Activated CD8-positive, alpha-beta T cell treated with anti-CD3 and anti-CD28 coated beads for 36 hours (primary cell): ENCODE measurements at regions of chr12 and their contacts with region 1.

Region 1: DNA sequence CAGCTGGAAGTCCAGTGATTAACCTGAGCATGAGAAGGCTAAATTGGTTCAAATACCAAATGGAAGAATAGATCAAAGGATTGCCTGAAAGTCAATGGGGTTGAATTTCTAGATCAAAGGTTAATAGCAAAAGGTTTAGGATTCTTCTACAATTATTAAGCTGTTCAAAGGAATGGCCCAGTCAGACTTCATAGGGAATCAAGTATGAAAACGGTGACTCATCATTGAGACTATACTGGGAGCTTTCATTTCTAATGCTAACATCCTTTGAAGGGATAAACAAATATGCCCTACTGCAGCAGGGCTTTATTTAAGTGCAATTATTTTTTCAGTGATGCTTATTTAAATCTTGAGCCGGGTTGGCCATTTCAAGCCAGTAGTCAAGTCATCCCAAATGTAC is 152.8 kb downstream of the RIMBP2 start:
- DNase-seq: no peak
- ATAC-seq: no peak
- H3K4me3 Mint-ChIP-seq: no peak overlapping the region
- H3K27ac Mint-ChIP-seq: no peak overlapping the region
- H3K4me1 Mint-ChIP-seq: no peaks in the 10 kb centered on the region
- H3K27me3 Mint-ChIP-seq: peaks cover 6% of the 10 kb centered on the region
- CTCF ChIP-seq: no peak

Region 2: GRCh38 chr12:130747867-130748740 is 184.8 kb after region 1 on chr12:
- CTCF ChIA-PET with region 1: no interaction called
- POLR2A ChIA-PET with region 1: no interaction called
- intact Hi-C with region 1: loop called (anchors 10 kb)
- DNase-seq: peak; percentile 87
- ATAC-seq: peak; percentile 92
- H3K4me3 Mint-ChIP-seq: no peak overlapping the region
- H3K27ac Mint-ChIP-seq: no peak overlapping the region
- H3K4me1 Mint-ChIP-seq: peaks cover 6% of the 10 kb centered on the region
- H3K27me3 Mint-ChIP-seq: peaks cover 7% of the 10 kb centered on the region
- CTCF ChIP-seq: peak; percentile 85